ENCODE measurements at regions of chr1 and their contacts with region 1.

Region 1: DNA sequence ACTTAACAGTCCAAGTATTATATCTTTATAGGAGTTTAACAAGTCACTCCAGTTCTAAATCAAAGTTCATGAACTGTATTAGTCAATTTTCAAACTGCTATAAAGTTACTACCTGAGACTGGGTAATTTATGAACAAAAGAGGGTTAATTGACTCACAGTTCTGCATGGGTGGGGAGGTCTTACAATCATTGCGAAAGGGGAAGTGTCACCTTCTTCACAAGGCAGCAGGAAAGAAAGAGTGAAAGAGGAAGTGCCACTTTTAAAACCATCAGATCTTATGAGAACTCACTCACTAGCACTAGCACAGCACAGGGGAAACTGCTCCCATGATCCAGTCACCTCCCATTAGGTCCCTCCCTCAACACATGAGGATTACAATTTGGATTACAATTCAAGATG is 70.0 kb downstream of the CLCA4 start:
- DNase-seq: no peak
- ATAC-seq: peak; percentile 97
- H3K4me3 Mint-ChIP-seq: peak overlapping the region; percentile 5
- H3K27ac Mint-ChIP-seq: peak overlapping the region; percentile 89
- H3K4me1 Mint-ChIP-seq: peaks cover 39% of the 10 kb centered on the region
- H3K27me3 Mint-ChIP-seq: no peaks in the 10 kb centered on the region
- CTCF ChIP-seq: no peak

Region 2: DNA sequence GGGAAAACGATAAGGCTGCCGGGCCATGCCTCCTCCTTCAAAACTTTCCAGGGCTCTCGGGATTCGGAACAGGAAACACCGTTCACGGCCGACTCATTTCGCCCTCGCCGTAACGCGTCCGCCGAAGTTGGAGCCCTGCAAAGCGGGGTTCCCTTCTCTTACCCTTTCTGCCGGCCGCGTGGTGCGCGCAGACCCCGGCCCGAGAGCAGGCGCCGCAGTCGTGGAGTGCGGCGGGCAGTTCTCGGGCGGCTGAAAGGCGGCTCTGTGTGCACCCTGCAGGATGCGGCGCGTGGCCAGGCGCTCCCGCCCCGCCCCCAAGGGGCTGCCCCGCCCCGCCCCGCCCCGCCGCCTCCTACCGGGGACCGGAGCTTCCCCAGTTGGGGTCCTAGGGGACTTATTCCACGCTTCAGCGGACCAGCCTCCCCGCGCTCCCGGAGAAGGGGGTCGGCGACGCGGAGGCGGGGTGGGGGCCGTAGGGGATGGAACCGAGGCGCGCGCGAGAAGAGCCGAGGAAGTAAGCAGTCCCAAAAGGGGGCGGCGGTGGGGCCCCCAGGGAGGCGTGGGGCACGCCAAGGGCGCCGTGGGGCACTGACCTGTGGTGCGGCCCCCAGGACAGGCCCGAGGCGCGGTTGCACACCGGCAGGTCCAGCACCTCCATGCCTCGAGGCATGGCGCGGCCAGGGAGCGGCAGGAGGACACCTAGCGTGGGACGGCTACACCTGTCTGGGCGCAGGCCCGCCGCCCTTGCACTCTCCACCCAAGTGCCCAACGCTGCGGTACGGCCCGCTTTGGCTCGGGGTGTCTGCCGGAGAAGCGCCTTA is 1619.8 kb before region 1 on chr1 and contains the start of gene MCOLN2:
- CTCF ChIA-PET with region 1: no interaction called
- POLR2A ChIA-PET with region 1: no interaction called
- intact Hi-C with region 1: loop called (anchors 5 kb)
- DNase-seq: peak; percentile 60
- ATAC-seq: peak; percentile 67
- H3K4me3 Mint-ChIP-seq: peak within 1 kb of the TSS; percentile 85
- H3K27ac Mint-ChIP-seq: peak within 1 kb of the TSS; percentile 87
- H3K4me1 Mint-ChIP-seq: peaks cover 63% of the 10 kb centered on the region
- H3K27me3 Mint-ChIP-seq: peaks cover 2% of the 10 kb centered on the region
- CTCF ChIP-seq: no peak
- total RNA-seq, gene MCOLN2: 60.1 and 80.2 TPM in 2 replicates

Region 3: DNA sequence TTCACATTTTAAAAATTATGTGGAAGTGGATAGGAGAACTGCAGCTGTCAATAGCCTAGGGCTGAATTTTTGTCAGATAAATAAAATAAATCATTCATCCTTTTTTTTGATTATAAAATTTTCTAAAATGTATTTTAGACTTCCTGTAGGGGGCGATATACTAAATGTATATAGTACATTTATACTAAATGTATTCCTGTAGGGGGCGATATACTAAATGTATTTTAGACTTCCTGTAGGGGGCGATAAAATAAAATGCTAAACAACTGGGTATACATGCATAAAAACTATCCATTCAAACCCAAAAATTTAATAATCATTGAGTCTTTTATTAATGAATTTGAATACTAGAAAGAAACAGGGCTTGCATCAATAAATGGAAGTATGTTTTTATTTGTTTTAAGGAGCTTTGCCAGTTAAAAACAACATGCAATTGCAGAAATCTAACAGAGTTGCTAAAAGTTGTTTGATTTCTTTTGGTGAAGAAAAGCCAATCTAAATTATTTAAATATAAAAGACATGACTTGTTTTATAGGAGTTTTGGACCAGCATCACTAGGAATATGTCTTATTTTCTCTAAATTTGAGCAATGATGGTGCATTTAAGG is 116.8 kb before region 1 on chr1:
- CTCF ChIA-PET with region 1: no interaction called
- POLR2A ChIA-PET with region 1: no interaction called
- intact Hi-C with region 1: loop called (anchors 2 kb)
- DNase-seq: no peak
- ATAC-seq: peak; percentile 56
- H3K4me3 Mint-ChIP-seq: no peak overlapping the region
- H3K27ac Mint-ChIP-seq: no peak overlapping the region
- H3K4me1 Mint-ChIP-seq: peaks cover 2% of the 10 kb centered on the region
- H3K27me3 Mint-ChIP-seq: peaks cover 15% of the 10 kb centered on the region
- CTCF ChIP-seq: peak; percentile 100

Region 4: DNA sequence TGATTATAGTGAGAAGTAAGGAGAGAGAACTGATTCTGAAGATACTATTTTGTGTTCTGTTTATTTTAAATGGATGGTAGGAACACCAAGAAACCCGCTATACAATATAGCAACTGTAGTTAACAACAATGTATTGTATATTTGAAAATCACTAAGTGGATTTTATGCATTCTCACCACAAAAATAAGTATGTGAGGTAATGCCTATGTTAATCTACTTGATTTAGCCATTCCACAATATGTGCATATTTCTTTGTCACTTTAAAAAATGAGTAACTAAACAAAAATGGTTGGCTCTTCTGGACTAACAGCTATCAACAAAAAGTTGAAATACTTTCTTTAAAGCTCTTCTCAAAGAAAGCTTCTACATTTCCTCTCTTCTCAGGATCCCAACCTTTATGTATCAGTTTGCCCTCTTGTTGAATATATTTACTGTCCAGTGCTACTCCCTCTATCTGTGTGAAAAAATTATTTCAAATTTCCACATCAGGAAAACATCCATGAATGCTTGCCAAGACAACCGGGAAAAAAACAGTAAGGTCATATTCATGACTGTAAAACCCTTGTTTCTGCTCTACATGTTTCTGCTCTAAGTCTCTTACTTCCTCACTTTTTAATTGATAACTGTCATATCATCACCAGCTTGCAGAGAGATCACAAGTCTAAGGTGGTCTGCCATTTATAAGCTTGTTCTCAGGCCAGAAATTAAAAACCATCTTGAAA is 42.9 kb before region 1 on chr1:
- CTCF ChIA-PET with region 1: no interaction called
- POLR2A ChIA-PET with region 1: no interaction called
- intact Hi-C with region 1: loop called (anchors 2 kb)
- DNase-seq: no peak
- ATAC-seq: no peak
- H3K4me3 Mint-ChIP-seq: no peak overlapping the region
- H3K27ac Mint-ChIP-seq: no peak overlapping the region
- H3K4me1 Mint-ChIP-seq: peaks cover 2% of the 10 kb centered on the region
- H3K27me3 Mint-ChIP-seq: no peaks in the 10 kb centered on the region
- CTCF ChIP-seq: no peak

Region 5: GRCh38 chr1:86648255-86648654 is 31.4 kb after region 1 on chr1:
- CTCF ChIA-PET with region 1: interaction called, 4 read pairs
- POLR2A ChIA-PET with region 1: no interaction called
- intact Hi-C with region 1: loop called (anchors 1 kb)
- DNase-seq: no peak
- ATAC-seq: peak; percentile 74
- H3K4me3 Mint-ChIP-seq: no peak overlapping the region
- H3K27ac Mint-ChIP-seq: no peak overlapping the region
- H3K4me1 Mint-ChIP-seq: peaks cover 10% of the 10 kb centered on the region
- H3K27me3 Mint-ChIP-seq: no peaks in the 10 kb centered on the region
- CTCF ChIP-seq: no peak

Region 6: DNA sequence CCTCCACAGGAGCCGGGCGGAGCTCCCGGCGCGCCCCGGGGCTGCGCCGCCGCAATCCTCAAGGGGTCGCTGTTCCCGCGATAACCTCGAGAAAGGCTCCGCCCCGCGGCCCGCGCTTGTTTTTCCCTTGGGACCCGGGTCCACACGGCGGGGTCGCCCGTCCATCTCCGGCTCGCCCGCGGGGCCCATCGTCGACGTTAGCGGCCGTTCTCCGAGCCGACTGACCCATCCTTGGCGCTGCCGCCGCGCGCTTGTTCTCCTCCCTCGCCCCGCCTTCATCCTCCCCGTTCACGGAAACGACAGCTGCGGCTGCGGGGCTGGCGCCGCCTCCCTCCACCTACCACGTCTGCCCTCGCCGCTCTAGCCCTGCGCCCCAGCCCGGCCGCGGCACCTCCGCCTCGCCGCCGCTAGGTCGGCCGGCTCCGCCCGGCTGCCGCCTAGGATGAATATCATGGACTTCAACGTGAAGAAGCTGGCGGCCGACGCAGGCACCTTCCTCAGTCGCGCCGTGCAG is 87.6 kb after region 1 on chr1 and contains the start of gene SH3GLB1:
- CTCF ChIA-PET with region 1: no interaction called
- POLR2A ChIA-PET with region 1: no interaction called
- intact Hi-C with region 1: loop called (anchors 1 kb)
- DNase-seq: peak; percentile 92
- ATAC-seq: peak; percentile 87
- H3K4me3 Mint-ChIP-seq: peak within 1 kb of the TSS; percentile 99
- H3K27ac Mint-ChIP-seq: peak within 1 kb of the TSS; percentile 99
- H3K4me1 Mint-ChIP-seq: peaks cover 46% of the 10 kb centered on the region
- H3K27me3 Mint-ChIP-seq: no peaks in the 10 kb centered on the region
- CTCF ChIP-seq: peak; percentile 26
- total RNA-seq, gene SH3GLB1: 63.8 and 63.9 TPM in 2 replicates

Region 7: DNA sequence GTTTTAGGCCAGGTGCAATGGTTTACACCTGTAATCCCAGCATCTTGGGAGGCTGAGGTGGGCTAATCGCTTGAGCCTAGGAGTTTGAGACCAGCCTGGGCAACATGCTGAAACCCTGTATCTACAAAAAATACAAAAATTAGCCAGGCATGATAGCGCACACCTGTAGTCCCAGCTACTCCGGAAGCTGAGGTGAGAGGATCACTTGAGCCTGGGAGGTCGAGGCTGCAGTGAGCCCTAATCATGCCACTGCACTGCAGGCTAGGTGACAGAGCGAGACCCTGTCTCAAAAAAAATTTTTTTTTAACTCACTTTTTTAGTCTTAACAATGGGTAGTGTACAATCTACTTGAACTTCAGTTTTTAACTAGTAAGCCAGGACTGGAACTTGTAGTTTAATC is 435.1 kb after region 1 on chr1:
- CTCF ChIA-PET with region 1: no interaction called
- POLR2A ChIA-PET with region 1: no interaction called
- intact Hi-C with region 1: loop called (anchors 5 kb)
- DNase-seq: no peak
- ATAC-seq: no peak
- H3K4me3 Mint-ChIP-seq: peak overlapping the region; percentile 55
- H3K27ac Mint-ChIP-seq: no peak overlapping the region
- H3K4me1 Mint-ChIP-seq: peaks cover 44% of the 10 kb centered on the region
- H3K27me3 Mint-ChIP-seq: no peaks in the 10 kb centered on the region
- CTCF ChIP-seq: no peak

Measured in activated B cell treated with CpG ODN at 0.5 μM for 24 hours (primary cell).